Heart left ventricle (tissue), 16 donors: ENCODE measurements at regions of chr3 and their contacts with region 1.

Region 1: DNA sequence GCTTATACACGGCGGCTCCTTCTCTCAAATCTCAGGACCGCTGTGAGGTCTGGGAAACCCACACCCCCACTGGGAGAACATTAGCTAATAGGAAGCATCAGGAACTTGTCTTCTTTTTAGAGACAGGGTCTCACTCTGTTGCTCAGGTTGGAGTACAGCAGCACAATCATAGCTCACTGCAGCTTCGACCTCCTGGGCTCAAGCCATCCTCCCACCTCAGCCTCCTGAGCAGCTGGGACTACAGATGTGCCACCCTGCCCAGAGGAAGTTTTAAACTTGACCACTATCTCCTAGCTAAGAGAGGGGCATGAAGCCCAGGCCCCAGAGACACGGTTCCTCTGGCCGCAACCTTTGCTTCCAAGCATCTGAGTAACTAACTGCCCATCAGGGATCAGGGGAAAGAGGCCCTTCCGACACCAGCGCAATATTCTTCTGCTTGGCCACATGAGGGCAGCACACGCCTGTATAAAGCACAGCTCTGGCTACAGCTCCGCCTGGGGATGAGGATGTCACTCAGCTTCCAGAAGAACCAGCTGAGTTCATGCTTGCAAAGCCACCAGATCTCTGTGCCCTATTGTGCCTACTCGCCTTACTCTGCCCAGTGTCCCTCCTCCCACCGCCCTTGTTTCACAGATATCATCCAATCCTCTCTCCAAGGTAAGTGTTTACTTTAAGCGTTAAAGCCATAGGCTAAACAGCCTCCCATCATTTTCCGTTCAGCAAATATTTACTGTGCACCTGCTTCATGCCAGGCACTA is 57.5 kb upstream of the SLC6A11 start:
- DNase-seq: peak in 4 of 5 donors; percentile 36 to 45 (median 41)
- ATAC-seq: peak; percentile 69 to 88 (median 84)
- H3K4me3 ChIP-seq: no peak overlapping the region
- H3K27ac ChIP-seq: no peak overlapping the region
- H3K4me1 ChIP-seq: no peaks in the 10 kb centered on the region
- H3K27me3 ChIP-seq: peaks cover 0 to 43% (median 11%) of the 10 kb centered on the region in 9 donors
- CTCF ChIP-seq: peak; percentile 49 to 74 (median 64)
- POLR2A ChIP-seq: no peak

Region 2: DNA sequence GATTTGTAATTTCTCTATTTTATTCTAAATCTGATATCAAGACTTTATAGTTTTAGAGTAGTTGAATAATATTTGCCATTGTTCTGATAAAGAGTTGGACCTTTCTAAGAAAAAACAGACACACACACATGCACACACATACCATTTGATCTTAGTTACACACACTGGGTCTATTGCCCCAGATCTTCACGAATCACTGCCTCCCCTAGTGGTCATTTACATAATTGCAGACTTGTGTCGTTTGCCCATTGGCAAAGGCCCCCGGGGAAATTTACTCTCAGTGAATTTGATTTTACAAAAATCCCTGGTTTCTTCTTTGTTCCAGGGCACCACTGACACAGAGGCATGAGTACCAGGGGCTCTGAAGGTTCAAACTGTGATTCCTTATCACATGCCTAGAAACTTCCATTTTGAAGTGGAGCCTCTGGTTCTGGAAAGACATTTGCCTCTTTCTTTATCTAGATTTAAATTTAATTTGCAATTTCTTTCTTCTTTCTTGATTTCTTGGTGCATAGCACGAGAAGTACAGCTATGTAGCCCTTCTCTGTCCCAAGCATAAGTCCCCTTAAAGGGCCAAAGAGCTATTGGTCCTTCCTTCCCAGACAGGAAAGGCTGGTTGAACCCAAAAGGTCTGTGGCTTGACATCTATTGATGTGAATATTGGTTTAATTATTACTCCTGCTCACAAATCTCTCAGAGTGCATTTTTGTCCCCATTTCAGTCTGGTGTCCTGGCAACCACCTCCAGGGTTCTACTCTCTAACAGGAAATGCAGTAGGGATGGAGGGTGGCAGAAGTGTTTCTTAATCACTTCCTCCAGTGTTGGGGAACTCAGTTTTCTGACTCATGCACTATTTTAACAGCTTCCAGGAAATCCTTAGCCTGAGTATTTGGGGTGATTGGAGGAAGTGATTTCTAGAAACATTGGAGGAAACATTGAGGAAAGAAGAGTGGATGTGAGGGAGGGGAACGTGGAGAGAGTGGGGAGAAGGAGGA is 25.2 kb after region 1 on chr3:
- intact Hi-C with region 1: no loop called
- DNase-seq: no peak
- ATAC-seq: no peak
- H3K4me3 ChIP-seq: no peak overlapping the region
- H3K27ac ChIP-seq: no peak overlapping the region
- H3K4me1 ChIP-seq: no peaks in the 10 kb centered on the region
- H3K27me3 ChIP-seq: peaks cover 0 to 41% (median 7%) of the 10 kb centered on the region in 9 donors
- CTCF ChIP-seq: peak; percentile 42 to 83 (median 62)
- POLR2A ChIP-seq: no peak

Region 3: DNA sequence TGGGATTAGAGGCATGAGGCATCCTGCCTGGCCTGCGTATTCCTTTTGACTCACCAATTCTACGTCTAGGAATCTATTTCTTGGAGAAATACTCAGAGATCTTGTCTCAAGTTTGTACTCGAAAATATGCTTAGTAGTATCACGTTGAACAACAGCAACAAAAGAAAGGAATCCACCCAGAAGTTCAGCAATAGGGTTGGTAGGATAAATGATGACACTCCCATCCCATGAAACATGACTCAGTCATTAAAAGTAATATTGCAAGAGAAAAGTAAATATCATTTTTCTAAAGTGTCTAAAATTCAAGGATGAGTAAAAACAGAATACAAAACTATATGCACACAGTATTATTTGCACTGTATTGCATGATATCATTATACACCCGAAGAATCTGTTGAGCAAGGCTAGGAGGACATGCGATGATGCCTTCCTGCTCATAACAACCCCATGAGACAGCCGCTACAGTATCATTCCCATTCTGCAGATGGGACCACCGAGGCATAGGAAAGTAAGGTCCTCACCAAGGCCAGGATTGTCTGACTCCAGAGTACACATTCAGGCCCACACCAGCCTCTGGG is 295.5 kb after region 1 on chr3:
- intact Hi-C with region 1: loop called (anchors 1 to 10 kb)
- DNase-seq: no peak
- ATAC-seq: no peak
- H3K4me3 ChIP-seq: no peak overlapping the region
- H3K27ac ChIP-seq: no peak overlapping the region
- H3K4me1 ChIP-seq: no peaks in the 10 kb centered on the region
- H3K27me3 ChIP-seq: peaks cover 0 to 56% (median 9%) of the 10 kb centered on the region in 9 donors
- CTCF ChIP-seq: no peak
- POLR2A ChIP-seq: no peak